Esophagus squamous epithelium (tissue), 5 donors: ENCODE measurements at regions of chr11 and their contacts with region 1.

Region 1: GRCh38 chr11:123246749-123247495 is 51.9 kb upstream of the CLMP start:
- DNase-seq: no peak
- H3K4me3 ChIP-seq: no peak overlapping the region
- H3K27ac ChIP-seq: no peak overlapping the region
- H3K4me1 ChIP-seq: peaks cover 0 to 8% (median 0%) of the 10 kb centered on the region in 3 donors
- H3K27me3 ChIP-seq: peaks cover 0 to 3% (median 0%) of the 10 kb centered on the region in 4 donors
- CTCF ChIP-seq: peak; percentile 91 to 98 (median 94)
- POLR2A ChIP-seq: no peak

Region 2: DNA sequence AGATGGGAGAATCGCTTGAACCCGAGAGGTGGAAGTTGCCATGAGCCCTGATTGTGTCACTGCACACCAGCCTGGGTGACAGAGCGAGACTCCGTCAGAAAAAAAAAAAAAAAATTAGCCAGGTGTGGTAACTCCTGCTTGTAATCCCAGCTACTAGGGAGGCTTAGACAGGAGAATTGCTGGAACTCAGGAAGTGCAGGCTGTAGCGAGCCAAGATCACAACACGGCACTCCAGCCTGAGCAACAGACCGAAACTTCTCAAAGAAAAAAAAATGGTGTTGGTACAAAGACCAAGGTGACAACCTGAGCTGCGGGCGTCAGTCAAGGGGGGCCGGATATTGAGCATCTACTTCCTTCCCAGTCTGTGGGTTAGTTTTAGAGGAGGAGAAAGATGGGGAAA is 136.6 kb before region 1 on chr11:
- intact Hi-C with region 1: loop called (anchors 5 kb)
- DNase-seq: no peak
- H3K4me3 ChIP-seq: no peak overlapping the region
- H3K27ac ChIP-seq: no peak overlapping the region
- H3K4me1 ChIP-seq: peaks cover 0 to 11% (median 0%) of the 10 kb centered on the region in 3 donors
- H3K27me3 ChIP-seq: peaks cover 0 to 4% (median 0%) of the 10 kb centered on the region in 4 donors
- CTCF ChIP-seq: no peak
- POLR2A ChIP-seq: no peak

Region 3: GRCh38 chr11:123166071-123166559 is 80.8 kb before region 1 on chr11:
- intact Hi-C with region 1: loop called (anchors 10 kb)
- DNase-seq: no peak
- H3K4me3 ChIP-seq: no peak overlapping the region
- H3K27ac ChIP-seq: peak overlapping the region in 3 of 4 donors; percentile 4 to 76 (median 70)
- H3K4me1 ChIP-seq: peaks cover 0 to 19% (median 0%) of the 10 kb centered on the region in 3 donors
- H3K27me3 ChIP-seq: no peaks in the 10 kb centered on the region
- CTCF ChIP-seq: peak in 4 of 6 experiments; percentile 13 to 52 (median 32)
- POLR2A ChIP-seq: no peak